AG04449 (cell line): ENCODE measurements at regions of chr15 and their contacts with region 1.

Region 1: GRCh38 chr15:39874890-39875549 is 45.0 kb downstream of the GPR176 start:
- DNase-seq: no peak
- H3K4me3 ChIP-seq: no peak overlapping the region
- CTCF ChIP-seq: peak; percentile 58

Region 2: DNA sequence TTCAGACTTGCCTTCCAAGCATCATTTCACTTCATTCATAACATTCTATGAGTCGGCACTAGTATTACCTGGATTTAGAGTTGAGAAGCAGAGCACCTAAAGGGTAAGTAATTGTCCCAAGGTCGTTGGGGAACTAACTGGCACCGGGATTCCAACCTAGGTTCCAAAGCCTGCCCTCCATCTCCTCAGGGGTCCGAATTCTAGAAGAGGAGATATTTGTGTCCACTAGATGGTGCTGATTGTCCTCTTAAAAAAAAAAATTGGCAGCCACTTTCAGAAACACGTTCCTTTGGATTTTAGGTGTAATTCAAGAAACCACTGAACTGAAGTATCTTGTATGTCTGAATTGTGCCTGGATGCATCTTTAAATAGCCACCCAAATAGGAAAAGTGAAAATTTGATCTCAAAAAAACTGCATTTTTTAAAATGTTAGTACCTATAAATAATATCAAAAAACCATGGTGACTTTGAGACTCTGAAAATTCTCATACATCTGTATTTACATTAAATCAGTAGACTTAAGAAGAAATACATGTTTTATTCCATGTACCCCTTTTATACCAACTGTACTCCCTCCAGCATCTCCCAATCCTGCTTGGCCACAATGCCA is 88.5 kb before region 1 on chr15:
- CTCF ChIA-PET with region 1: interaction called, 33 read pairs
- POLR2A ChIA-PET with region 1: no interaction called
- DNase-seq: no peak
- H3K4me3 ChIP-seq: no peak overlapping the region
- CTCF ChIP-seq: peak; percentile 41

Region 3: DNA sequence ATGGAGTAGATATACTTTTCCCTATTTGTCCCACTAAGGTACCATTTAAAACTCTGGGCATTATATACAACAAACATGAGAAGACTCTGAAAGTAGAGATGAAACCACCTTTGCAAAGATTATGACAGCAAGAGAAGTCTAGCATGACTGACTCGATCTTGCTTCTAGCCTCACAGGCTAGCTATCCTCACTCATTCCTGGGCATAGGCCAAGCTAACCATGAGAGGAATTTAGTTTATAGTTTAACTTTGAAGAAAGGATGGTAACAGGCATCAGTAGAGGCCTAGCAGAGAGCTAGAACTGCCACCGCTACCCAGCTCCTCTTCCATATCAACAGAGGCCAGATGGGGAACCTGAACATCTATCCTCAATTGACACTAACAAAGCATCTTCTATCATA is 28.9 kb before region 1 on chr15:
- CTCF ChIA-PET with region 1: no interaction called
- POLR2A ChIA-PET with region 1: no interaction called
- DNase-seq: no peak
- H3K4me3 ChIP-seq: no peak overlapping the region
- CTCF ChIP-seq: no peak

Region 4: DNA sequence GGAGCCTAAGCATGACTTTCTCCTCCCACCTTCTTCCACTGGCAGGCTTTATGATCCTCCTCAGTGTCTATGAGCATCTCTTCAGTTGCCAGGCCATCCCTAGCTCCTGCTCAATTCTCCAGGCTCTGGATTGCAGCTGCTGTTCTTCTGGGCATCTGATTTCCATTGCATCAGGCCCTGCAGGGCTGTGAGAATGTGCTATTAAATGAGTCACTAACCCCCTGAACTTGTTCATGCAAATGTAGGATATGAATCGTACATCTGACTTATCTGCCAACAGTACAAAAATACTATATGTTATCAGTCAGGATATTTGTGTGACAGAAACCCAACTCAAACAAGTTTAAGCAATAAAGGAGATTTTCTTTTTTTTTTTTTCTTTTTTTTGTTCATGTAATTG is 33.2 kb after region 1 on chr15:
- CTCF ChIA-PET with region 1: interaction called, 11 read pairs
- POLR2A ChIA-PET with region 1: no interaction called
- DNase-seq: peak; percentile 79
- H3K4me3 ChIP-seq: no peak overlapping the region
- CTCF ChIP-seq: no peak

Region 5: DNA sequence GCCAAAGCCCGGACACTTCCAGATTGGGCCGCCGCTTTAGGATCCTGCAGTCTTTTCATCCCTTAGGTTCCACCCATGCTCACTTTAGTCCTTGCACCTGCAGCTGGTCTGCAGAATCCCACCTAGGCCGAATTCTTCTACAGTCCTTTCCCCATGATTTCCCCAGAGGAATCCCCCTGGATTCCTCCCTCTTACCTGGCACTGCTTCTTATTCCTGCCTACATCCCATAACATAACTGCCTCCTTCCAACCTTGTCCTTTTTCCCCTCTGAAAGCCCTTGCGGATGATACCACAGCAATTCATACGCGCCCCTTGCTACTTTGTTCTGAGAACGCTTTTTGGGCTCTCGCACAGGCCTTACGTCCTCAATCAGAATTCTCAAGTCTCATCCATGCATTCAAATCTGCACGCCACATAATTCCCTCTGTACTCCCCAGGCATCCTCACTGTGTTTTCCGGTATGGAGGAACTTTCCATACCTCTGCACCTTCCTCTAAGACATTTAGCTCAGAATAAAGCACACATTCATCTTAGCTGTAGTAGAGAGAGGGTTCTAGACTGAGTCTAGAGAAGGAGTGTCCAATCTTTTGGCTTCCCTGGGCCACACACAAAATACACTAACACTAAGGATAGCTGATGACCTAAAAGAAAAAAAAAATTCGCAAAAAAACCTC is 59.5 kb after region 1 on chr15:
- CTCF ChIA-PET with region 1: no interaction called
- POLR2A ChIA-PET with region 1: no interaction called
- DNase-seq: no peak
- H3K4me3 ChIP-seq: peak overlapping the region; percentile 75
- CTCF ChIP-seq: no peak